HCT116 (cell line): ENCODE measurements at regions of chr5 and their contacts with region 1.

Region 1: DNA sequence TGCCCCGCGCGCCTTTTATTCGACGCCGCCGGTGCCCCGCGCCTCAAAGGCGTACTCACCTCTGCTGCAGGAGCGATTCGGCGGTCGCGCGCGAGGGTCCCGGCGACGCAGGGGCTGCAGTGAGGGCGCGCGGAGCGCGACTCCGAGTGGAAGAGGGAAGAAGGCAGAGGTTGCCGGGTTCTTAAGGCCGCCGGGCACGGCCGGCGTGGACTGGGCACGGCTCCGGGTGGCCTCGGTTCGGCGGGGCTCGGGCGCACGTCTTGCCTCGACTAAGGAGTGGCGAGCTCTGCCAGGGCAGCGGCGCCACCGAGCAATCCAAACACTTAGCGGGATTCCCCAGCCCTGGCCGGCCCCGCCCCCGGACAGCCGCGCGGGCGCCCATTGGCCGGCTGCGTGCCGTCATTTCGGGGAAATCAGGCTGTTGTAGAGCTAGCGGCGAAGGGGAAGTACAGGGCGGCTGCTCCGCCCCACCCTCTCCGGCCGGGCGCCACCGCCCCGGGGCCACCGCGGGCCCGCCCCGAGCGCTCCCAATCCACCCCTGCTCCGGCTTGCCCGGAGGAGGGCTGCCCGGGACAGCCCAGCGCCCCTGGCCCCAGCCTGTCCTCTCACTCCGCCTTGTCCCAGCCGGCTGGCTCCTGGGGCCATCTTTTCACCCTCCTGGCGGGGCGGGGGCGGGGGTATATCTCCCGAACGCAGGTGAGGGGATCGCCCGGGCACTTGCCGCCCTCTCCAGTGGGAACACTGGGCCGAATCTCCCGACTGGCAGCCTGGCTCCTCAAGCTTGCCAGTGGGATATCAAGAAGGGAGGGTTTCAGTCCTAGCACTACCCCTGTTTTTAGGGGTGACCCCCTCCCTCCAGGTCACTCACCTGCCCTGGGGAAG is at the start of gene IRF1:
- DNase-seq: peak; percentile 87
- ATAC-seq: peak; percentile 92
- H3K4me3 ChIP-seq: peak within 1 kb of the TSS; percentile 80 to 88
- H3K27ac ChIP-seq: peak within 1 kb of the TSS; percentile 96
- H3K4me1 ChIP-seq: peaks cover 21 to 38% of the 10 kb centered on the region in 2 experiments
- H3K27me3 ChIP-seq: no peaks in the 10 kb centered on the region
- CTCF ChIP-seq: no peak
- POLR2A ChIP-seq: peak; percentile 91
- RAD21 ChIP-seq: no peak
- total RNA-seq, gene IRF1: 30.1 TPM

Region 2: DNA sequence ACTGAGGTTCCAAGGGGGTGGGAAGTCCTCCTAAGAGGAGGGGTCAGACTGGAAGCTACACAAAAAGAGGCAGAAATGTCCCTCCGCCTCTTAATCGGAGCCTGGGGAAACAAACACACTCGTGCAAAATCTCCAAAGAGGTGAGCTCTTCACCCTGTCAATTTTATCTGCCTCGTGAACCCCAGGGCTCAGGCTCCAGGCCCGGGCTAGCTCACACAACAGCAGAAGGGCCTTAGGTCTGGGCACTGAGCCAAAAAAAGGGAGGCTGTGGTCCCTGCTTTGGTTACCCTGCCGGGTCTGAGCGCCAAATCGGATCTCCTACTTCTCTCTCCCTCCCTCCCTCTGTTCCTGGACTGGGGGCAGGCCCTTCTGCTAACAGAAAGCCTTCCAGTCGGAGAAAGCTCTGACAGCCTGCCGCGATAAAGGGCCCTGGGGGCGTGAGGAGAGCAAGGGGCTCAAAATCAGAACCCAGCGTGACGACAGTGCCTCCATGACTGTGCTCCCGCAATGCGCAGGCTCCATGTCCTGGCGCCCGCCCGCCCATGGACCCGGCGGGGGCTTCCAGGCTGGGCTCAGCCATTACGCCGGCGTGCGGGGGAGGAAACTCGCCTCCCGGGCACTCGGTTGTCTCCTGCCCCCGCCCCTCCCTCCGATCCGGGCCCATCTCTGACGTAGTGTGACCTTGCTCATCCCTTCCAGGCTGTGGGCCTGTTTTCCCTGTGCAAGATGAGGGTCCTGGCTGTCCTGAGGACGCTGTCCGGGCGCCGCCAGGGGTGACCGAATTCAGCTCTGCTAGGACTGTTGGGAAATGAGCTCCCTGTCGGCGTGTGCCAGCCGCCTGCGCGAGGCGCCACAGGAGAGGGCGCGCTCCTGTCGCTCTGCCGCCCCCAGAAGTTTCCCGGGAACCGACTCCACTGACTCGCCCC is 197.4 kb before region 1 on chr5:
- CTCF ChIA-PET with region 1: no interaction called
- POLR2A ChIA-PET with region 1: no interaction called
- RAD21 ChIA-PET with region 1: no interaction called
- intact Hi-C with region 1: loop called (anchors 10 kb)
- DNase-seq: peak; percentile 59
- ATAC-seq: peak; percentile 62
- H3K4me3 ChIP-seq: peak overlapping the region; percentile 59 to 79
- H3K27ac ChIP-seq: peak overlapping the region; percentile 90
- H3K4me1 ChIP-seq: peaks cover 14 to 37% of the 10 kb centered on the region in 2 experiments
- H3K27me3 ChIP-seq: no peaks in the 10 kb centered on the region
- CTCF ChIP-seq: 0 out of 6 replicates have a peak, but pooled peaks of 2 of the 3 experiments have one; percentile 5 to 16
- POLR2A ChIP-seq: peak; percentile 39
- RAD21 ChIP-seq: no peak

Region 3: DNA sequence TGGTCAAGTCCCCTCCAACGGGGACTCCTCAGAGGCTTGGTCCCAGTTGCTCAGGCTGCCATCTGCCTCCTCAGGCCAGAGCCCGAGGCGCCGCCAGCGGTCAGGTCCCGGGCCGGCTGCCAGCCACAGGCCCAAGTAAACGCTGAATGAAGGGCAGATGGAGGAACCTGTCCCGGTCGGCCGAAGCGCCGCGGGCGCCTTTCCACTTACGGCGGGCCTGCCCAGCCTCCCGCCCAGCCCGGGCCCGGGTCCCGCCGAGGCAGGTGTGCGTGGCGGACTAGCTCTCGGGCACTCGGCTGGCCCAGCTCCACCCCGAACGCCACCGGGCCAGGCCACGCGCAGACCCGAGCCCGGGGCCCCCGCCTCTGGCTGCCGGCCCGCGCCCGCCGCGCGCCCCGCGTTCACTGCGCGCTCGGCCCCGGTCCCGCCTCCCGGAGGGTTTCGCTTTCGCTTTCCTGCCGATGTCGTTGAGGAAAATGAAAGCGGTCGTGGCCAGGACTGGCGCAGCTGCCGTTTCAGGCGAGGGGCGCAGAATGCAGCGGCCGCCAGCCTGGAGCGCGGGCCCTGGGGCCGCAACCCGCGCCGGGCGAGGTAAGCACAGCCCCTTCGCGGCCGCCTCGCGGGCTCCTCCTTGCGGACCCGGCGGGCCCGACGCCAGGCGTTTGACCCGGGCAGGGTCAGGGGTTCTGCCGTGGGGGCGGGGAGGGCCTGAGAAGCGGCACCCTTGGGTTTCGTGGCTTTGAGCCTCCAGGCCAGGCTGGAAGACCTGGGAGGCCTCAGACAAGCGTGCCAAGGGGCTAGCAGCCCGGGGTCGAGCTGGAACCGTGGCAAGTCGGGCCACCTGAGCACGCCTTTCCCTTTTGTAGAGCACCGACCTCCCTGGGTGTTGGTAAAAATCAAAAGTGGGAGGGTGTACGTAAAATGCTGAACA is 80.0 kb before region 1 on chr5:
- CTCF ChIA-PET with region 1: no interaction called
- POLR2A ChIA-PET with region 1: interaction called, 11 read pairs
- RAD21 ChIA-PET with region 1: no interaction called
- intact Hi-C with region 1: no loop called
- DNase-seq: no peak
- ATAC-seq: peak; percentile 86
- H3K4me3 ChIP-seq: peak overlapping the region; percentile 53 to 64
- H3K27ac ChIP-seq: peak overlapping the region; percentile 91
- H3K4me1 ChIP-seq: peaks cover 31 to 71% of the 10 kb centered on the region in 2 experiments
- H3K27me3 ChIP-seq: no peaks in the 10 kb centered on the region
- CTCF ChIP-seq: peak; percentile 25 to 76 (median 61); a peak in 4 of 6 replicates
- POLR2A ChIP-seq: no peak
- RAD21 ChIP-seq: peak; percentile 56

Region 4: DNA sequence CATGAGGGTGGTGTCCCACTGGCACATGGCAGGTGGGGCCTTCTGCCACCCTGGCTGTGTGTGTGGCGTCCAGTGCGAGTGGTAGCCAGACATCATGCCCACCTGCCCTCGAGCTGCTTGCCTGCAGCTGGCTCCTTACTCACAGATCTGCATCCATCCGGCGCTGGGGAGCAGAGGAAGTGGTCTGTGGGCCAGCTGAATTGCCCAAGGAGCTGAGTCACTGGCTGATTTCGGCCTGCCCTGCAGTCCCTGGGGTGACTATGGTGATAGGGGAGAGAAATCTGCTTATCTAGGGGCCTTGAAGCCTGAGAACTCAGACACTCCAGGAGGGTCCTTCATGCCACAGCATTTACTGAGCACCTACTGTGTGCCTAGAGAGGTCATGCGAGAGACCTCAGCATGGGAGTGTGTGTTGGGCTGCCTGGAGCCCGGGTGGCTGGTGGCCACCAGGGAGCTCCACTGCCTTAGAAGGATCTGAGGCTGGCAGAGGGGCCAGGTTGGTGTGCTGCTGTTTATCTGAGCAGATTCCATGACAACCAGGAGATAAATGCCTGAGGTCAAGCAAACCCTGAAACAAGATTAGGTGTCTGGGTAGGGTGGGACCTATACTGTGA is 64.1 kb before region 1 on chr5:
- CTCF ChIA-PET with region 1: interaction called, 6 read pairs
- POLR2A ChIA-PET with region 1: interaction called, 19 read pairs
- RAD21 ChIA-PET with region 1: interaction called, 4 read pairs
- intact Hi-C with region 1: no loop called
- DNase-seq: no peak
- ATAC-seq: peak; percentile 75
- H3K4me3 ChIP-seq: no peak overlapping the region
- H3K27ac ChIP-seq: peak overlapping the region; percentile 44; the same call in 1 of the 2 replicates
- H3K4me1 ChIP-seq: peaks cover 61 to 83% of the 10 kb centered on the region in 2 experiments
- H3K27me3 ChIP-seq: no peaks in the 10 kb centered on the region
- CTCF ChIP-seq: peak in 2 of 3 experiments; percentile 69 to 70; a peak in 4 of 6 replicates
- POLR2A ChIP-seq: no peak
- RAD21 ChIP-seq: no peak

Region 5: DNA sequence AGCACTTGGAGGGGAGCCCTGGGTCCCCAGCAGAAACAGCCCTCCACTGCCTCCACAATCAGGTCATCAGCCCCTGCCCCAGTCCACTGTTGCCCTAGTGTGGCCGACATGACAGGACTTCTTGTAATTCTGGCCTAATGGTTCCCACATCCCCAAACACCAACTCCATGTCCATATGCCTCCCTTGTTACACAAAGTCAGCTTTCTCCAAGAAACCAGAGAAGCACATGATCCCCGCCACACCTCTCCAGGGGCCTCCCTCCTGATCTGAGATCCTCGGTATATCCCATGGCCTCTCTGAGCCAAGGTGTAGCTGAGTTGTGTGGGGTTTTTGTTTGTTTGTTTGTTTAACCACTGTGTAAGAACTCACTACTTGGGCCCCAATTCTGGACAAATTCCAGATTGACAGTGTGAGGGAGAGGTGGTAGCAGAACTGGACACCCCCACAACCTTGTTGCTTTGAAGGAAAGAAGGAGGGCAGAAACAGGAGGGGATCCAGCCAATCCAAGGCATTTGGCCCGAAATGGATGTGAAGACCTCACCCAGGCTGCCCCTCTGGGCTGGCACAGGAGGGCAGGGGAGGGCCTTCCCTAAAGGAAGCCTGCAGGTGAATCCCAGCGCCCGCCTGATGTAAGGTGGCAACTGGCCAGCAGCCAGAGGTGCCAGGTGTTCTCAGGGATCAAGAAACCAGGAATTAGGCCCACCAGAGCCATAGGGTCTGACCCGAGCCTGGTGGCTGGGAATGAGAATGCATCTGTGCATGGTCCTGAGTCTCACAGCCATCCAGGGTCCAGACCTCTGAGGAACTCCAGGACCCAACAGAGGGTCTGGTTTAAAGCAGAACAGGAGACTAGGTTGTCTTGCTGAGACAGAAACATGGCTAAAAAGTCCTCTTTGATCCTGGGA is 13.6 kb before region 1 on chr5:
- CTCF ChIA-PET with region 1: interaction called, 8 read pairs
- POLR2A ChIA-PET with region 1: interaction called, 33 read pairs
- RAD21 ChIA-PET with region 1: interaction called in 1 of 2 experiments, 3 read pairs
- intact Hi-C with region 1: no loop called
- DNase-seq: no peak
- ATAC-seq: peak; percentile 58
- H3K4me3 ChIP-seq: no peak overlapping the region
- H3K27ac ChIP-seq: no peak overlapping the region
- H3K4me1 ChIP-seq: no peaks in the 10 kb centered on the region; a peak in 1 of 4 replicates
- H3K27me3 ChIP-seq: no peaks in the 10 kb centered on the region
- CTCF ChIP-seq: peak in 1 of 3 experiments; percentile 24; a peak in 1 of 6 replicates
- POLR2A ChIP-seq: no peak
- RAD21 ChIP-seq: no peak

Region 6: GRCh38 chr5:132500931-132501630 is 10.4 kb after region 1 on chr5:
- CTCF ChIA-PET with region 1: interaction called, 18 read pairs
- POLR2A ChIA-PET with region 1: interaction called, 10 read pairs
- RAD21 ChIA-PET with region 1: no interaction called
- intact Hi-C with region 1: no loop called
- DNase-seq: no peak
- ATAC-seq: no peak
- H3K4me3 ChIP-seq: no peak overlapping the region
- H3K27ac ChIP-seq: no peak overlapping the region; the same call in 1 of the 2 replicates
- H3K4me1 ChIP-seq: peaks cover 15 to 64% of the 10 kb centered on the region in 2 experiments
- H3K27me3 ChIP-seq: no peaks in the 10 kb centered on the region
- CTCF ChIP-seq: peak in 2 of 3 experiments; percentile 78 to 96; a peak in 4 of 6 replicates
- POLR2A ChIP-seq: no peak
- RAD21 ChIP-seq: no peak

Region 7: DNA sequence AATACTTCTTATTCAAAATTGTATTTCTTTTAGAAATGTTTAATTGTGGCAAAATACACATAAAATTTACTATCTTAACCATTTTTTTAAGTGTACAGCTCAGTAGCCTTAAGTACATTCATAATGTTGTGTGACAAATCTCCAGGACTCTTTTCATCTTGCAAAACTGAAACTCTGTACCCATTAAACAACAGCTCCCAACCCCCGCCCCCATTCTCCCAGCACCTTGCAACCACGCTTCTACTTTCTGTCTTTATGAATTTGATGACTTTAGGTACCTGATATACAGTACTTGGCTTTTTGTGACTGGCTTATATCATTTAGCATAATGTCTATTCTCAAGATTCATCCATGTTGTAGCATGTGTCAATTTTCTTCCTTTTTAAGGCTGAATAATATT is 55.4 kb after region 1 on chr5:
- CTCF ChIA-PET with region 1: no interaction called
- POLR2A ChIA-PET with region 1: no interaction called
- RAD21 ChIA-PET with region 1: no interaction called
- intact Hi-C with region 1: no loop called
- DNase-seq: no peak
- ATAC-seq: no peak
- H3K4me3 ChIP-seq: no peak overlapping the region
- H3K27ac ChIP-seq: no peak overlapping the region
- H3K4me1 ChIP-seq: no peaks in the 10 kb centered on the region
- H3K27me3 ChIP-seq: no peaks in the 10 kb centered on the region
- CTCF ChIP-seq: no peak
- POLR2A ChIP-seq: no peak
- RAD21 ChIP-seq: no peak